Activated T-helper 2 cell treated with anti-CD3 and anti-CD28 coated beads, Interferon-gamma antibody, Interleukin-2, Interleukin-4, amounts not matched to agents 10 μg/mL and 5 μg/mL and 100 μg/mL, durations not matched to agents 14 hours and 24 hours and 36 hours (primary cell): ENCODE measurements at regions of chr14 and their contacts with region 1.

Region 1: DNA sequence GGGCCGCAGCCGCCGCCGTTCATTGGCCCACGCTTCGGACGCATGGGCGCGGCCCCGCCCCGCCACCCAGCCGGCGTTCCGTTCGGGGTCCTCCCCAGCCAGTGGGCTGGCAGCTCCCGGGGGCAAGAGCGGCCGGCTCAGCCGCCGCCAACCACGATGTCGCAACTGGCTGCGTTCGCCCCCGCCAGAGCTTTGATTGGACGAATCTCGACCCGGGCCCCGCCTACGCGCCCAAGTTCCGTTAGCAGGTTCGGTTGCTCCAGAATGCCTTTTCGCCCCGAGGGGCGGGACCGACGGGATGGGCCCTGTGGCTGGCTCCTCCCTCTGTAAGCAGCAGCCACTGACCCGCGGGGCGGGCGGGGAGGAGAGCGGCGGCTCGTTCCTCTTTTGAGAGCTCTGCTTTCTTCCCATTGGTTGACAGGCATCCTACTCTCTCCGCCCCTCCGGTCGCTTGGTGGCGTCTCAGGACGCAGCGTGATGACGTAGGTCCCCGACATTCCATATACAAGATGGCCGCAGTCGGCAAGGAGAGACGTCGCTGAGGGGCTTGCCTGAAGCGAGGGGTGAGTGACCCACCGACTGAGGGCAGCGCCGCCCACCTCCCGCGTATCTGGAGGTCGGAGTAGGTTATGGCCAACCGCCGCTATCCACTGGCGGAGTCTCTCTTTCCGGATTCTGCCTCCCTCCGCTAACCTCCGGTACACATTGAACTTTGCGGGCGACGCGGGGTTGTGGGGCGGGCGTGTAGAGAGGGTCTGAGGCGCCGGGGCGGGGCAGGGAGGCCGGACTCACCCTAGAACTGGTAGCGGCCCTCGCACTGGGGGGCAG is at the start of gene CCNK:
- DNase-seq: peak; percentile 100
- H3K4me3 Mint-ChIP-seq: peak within 1 kb of the TSS; percentile 90
- H3K27ac Mint-ChIP-seq: peak within 1 kb of the TSS; percentile 92
- H3K4me1 Mint-ChIP-seq: peaks cover 43% of the 10 kb centered on the region
- H3K27me3 Mint-ChIP-seq: no peaks in the 10 kb centered on the region
- total RNA-seq, gene CCNK: 77.8 and 80.4 TPM in 2 replicates

Region 2: GRCh38 chr14:99502989-99503421 is 21.9 kb after region 1 on chr14:
- intact Hi-C with region 1: no loop called
- DNase-seq: no peak
- H3K4me3 Mint-ChIP-seq: no peak overlapping the region
- H3K27ac Mint-ChIP-seq: no peak overlapping the region
- H3K4me1 Mint-ChIP-seq: no peaks in the 10 kb centered on the region
- H3K27me3 Mint-ChIP-seq: no peaks in the 10 kb centered on the region

Region 3: DNA sequence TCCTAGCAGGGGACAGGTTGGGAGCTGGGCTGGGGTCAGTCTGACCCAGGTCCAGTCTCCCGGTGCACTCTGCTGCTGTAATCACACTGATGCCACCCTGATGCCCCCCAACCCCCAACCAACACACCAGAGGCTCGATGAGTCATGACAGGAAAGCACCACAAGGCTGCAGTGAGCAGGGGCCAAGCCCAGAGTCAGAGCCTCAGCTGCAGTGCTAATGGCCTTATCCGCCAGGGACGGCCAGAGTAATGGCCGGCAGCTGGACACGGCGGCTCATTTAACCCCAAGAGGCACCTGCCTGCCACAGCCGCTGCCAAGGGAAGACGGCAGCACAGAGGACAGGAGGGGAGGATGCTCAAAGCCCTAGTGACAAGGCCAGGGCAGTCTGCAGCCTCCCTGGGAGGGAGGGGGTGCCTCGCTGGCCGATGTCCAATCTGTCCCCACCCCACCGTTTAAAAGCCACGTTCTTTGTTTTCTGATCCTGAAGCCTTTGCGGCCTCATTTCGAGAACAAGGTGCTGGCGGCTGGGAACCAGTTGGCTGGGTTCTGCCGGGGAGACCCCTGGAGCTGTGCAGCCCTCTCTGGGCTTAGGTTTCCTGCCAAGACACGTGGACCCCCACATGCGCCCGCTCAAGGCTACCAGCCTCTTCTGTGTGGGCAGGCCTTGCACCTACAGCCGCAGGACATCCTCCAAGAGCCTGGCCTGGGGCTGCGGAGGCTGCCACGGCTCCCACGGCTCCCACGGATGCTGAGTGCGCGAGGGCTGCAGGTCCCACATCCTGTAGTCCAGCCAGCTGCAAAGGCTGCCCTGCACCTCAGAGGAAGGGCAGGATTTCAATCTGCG is 109.8 kb after region 1 on chr14:
- intact Hi-C with region 1: no loop called
- DNase-seq: no peak
- H3K4me3 Mint-ChIP-seq: no peak overlapping the region
- H3K27ac Mint-ChIP-seq: no peak overlapping the region
- H3K4me1 Mint-ChIP-seq: peaks cover 14% of the 10 kb centered on the region
- H3K27me3 Mint-ChIP-seq: no peaks in the 10 kb centered on the region

Region 4: GRCh38 chr14:99604283-99604765 is 123.2 kb after region 1 on chr14:
- intact Hi-C with region 1: loop called (anchors 1 kb)
- DNase-seq: peak; percentile 93
- H3K4me3 Mint-ChIP-seq: peak overlapping the region; percentile 86
- H3K27ac Mint-ChIP-seq: peak overlapping the region; percentile 87
- H3K4me1 Mint-ChIP-seq: peaks cover 18% of the 10 kb centered on the region
- H3K27me3 Mint-ChIP-seq: peaks cover 6% of the 10 kb centered on the region

Region 5: GRCh38 chr14:99683619-99684355 is 202.7 kb after region 1 on chr14 and contains the start of gene CYP46A1:
- intact Hi-C with region 1: loop called (anchors 5 kb)
- DNase-seq: peak; percentile 99
- H3K4me3 Mint-ChIP-seq: peak within 1 kb of the TSS; percentile 84
- H3K27ac Mint-ChIP-seq: peak within 1 kb of the TSS; percentile 68
- H3K4me1 Mint-ChIP-seq: peaks cover 3% of the 10 kb centered on the region
- H3K27me3 Mint-ChIP-seq: peaks cover 29% of the 10 kb centered on the region
- total RNA-seq, gene CYP46A1: not detected in 2 replicates

Region 6: DNA sequence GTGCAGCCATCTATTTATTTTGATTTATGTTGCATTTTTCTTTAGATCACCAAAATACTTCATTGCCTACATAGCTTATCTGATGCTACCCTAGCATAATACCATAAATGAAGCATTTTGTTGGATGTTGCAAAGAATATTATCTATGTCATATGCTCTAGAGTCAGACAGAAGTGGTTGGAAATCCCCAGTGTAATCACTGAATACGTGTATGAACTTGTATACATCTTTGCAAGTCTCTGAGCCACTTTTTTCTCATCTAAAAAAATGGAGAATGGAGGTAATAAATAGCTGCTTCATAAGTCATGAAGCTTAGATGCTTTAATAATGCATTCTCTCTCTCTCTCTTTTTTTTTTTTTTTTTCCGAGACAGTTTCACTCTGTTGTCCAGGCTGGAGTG is 602.6 kb after region 1 on chr14:
- intact Hi-C with region 1: no loop called
- DNase-seq: no peak
- H3K4me3 Mint-ChIP-seq: no peak overlapping the region
- H3K27ac Mint-ChIP-seq: peak overlapping the region; percentile 42
- H3K4me1 Mint-ChIP-seq: peaks cover 86% of the 10 kb centered on the region
- H3K27me3 Mint-ChIP-seq: no peaks in the 10 kb centered on the region